ENCODE measurements at regions of chr17 and their contacts with region 1.

Region 1: GRCh38 chr17:50199833-50200456 is 1.5 kb downstream of the COL1A1 start:
- DNase-seq: peak; percentile 86
- CTCF ChIP-seq: no peak

Region 2: DNA sequence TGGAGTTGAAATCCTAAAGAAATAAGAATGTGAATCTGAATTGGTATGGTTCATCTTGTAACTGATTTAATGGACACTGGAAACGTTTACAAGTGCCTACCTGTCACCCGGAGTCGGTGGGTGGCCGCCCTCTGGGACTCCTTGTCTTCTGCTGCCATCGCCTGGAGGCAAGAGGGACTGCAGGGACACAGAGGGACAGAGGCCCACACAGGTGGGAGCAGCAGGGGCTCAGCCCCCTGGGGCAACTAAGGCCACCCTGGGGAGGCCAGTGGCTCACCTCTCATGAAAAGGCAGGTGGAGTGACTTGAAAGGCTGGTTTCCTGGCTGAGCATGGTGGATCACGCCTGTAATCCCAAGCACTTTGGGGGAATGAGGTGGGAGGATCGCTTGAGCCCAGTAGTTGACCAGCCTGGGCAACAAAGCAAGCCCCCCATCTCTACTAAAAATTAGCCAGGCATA is 97.5 kb after region 1 on chr17:
- in situ Hi-C with region 1: loop called (anchors 10 kb)
- DNase-seq: peak; percentile 84
- CTCF ChIP-seq: peak; percentile 94